ENCODE measurements at regions of chr12 and their contacts with region 1.

Region 1: DNA sequence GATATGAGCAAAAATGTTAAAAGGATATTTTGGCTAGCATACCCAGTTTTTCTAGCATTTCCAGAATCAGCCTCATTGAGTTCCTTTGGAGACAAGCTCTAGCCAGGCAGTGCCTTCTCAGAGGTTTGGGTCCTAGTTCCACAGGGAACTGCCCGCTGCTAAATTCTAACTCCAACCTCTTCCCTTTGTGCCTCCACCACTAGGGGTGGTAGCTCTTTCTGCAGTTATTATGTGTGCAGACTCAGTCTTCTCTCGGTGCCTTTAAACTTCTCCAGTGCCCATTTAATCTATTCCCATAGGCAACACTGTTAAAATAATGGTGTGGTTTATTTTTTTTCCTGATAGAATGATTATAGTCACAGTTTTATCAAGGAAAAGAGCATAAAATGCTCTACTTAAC is 21.5 kb upstream of the SLC25A3 start:
- DNase-seq: no peak
- H3K4me3 ChIP-seq: no peak overlapping the region
- H3K27ac ChIP-seq: no peak overlapping the region
- H3K4me1 ChIP-seq: no peaks in the 10 kb centered on the region
- H3K27me3 ChIP-seq: no peaks in the 10 kb centered on the region
- CTCF ChIP-seq: no peak

Region 2: GRCh38 chr12:98653866-98654493 is 82.0 kb after region 1 on chr12:
- intact Hi-C with region 1: loop called (anchors 5 kb)
- DNase-seq: no peak
- H3K4me3 ChIP-seq: no peak overlapping the region
- H3K27ac ChIP-seq: no peak overlapping the region
- H3K4me1 ChIP-seq: no peaks in the 10 kb centered on the region
- H3K27me3 ChIP-seq: no peaks in the 10 kb centered on the region
- CTCF ChIP-seq: peak; percentile 62 to 71